ENCODE measurements at regions of chr3 and their contacts with region 1.

Region 1: DNA sequence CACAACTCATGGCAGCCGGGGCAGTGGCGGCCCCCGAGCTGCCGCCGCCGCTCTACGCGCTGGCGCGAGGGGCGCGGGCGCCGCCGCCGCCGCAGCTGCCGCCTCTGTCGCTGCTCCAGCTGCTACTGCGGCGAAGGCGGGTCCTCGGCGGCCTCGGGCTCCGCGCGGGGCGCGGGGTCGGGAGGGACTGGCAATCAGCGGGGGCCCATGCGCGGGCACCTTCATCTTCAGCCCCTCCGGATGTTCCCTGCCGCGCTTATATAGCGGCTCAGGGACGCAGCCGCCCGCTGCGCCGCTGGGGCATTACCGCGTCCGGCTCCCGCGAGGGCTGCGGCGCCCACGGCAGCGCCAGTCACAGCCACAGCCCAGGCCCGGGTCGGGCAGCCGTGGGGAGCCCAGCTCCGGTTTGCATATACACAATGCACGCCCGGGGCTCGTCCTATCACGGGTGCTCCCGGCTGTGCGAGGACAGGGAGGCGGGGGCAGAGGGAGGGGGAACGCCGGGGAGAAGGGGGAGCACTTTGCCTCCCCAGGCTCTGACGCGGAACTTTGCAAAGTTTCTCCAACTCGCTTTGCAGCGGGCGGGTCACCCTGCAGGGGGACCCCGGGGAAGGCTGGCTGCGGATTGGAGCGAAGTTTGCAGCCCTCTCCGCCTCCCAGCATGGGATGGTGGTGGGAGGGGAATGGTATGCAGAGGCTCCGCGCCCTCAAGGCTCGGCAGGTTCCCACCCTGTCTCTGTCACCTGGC is at the start of gene VGLL3:
- DNase-seq: no peak
- total RNA-seq, gene VGLL3: 5.2 TPM

Region 2: DNA sequence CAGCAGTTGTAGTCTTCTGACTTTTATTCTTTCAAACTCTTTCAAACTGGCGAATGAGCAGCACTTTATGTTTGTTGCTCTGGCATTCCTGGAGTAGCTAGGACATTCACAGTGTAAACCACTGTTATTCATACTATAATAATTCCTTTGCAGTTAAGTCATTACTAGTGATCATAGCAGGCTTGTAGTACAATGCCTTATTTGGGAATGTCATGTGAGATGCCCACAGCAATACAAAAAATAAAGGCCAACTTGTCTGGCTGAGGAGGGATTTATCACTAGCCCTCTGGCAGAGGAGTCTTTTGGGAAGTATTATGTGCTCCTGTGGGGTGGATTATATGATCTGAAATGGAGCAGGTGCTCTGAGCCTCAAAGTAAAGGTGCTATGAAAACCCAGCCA is 197.1 kb before region 1 on chr3:
- intact Hi-C with region 1: loop called (anchors 10 kb)
- DNase-seq: no peak

Region 3: DNA sequence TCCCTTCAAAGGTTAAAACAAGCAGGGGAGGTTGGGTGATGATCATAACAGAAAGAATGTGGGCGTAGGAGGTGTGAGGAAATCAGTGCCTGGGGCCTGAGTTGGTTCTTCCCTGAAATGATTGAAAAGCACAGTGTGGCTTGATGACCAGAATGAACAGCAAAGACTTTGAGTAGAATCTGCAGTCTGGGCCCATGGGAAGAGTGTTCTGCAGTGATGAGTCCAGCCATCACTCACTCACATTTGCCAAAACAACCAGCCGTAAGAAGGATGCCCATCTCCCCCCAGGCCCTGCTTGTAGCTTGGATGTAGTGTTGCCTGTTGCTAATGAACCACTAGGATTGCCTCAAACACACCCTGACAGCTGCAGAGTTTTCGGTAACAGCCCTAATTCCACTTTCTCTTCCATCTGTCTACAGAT is 67.8 kb before region 1 on chr3:
- intact Hi-C with region 1: no loop called
- DNase-seq: no peak

Region 4: GRCh38 chr3:86942206-86942605 is 48.7 kb before region 1 on chr3:
- intact Hi-C with region 1: no loop called
- DNase-seq: no peak

Region 5: GRCh38 chr3:87033205-87033604 is 42.3 kb after region 1 on chr3:
- intact Hi-C with region 1: no loop called
- DNase-seq: no peak

Region 6: DNA sequence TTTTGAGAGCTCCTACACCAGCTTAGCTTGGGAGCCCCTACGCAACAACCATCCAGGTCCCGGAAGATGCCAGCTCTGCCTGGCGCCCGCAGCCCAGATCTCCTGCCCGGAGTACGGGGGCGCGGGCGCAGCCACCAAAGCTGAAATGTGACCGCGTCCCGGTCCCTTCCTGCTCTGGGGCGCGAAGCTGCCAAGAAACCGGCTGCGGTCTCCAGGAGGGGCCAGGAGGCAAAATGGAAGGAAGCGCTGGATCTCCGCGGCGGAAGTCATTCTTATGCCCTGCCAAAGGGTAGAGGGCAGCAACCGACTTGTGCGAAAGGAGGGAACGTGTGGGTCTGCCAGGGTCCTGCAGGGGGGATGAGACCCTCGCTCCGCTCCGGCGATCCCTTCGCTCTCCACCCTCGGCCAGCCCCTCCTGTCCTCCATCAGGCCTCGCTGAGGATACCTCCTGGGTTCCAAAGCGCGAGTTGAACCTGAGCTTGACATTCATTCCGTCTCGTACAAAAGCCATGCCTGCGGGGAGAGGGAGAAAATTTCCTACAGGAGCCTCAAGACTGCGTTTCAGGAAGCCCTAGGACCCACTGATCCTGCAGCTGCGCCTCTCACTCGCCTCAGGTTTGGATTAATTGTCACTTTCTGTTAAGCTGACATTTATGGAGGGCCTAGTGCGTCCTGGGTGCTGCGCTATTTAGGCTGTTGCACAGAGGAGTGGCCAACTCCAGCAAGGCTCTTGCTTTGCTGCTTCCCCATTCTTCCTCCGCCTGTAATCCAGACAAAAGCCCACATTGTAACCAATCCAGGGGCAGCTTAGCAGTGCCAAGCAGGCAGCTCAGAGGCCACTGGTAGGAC is 98.3 kb after region 1 on chr3:
- intact Hi-C with region 1: loop called (anchors 5 kb)
- DNase-seq: peak; percentile 77